Sigmoid colon (tissue), 7 donors: ENCODE measurements at regions of chr19 and their contacts with region 1.

Region 1: DNA sequence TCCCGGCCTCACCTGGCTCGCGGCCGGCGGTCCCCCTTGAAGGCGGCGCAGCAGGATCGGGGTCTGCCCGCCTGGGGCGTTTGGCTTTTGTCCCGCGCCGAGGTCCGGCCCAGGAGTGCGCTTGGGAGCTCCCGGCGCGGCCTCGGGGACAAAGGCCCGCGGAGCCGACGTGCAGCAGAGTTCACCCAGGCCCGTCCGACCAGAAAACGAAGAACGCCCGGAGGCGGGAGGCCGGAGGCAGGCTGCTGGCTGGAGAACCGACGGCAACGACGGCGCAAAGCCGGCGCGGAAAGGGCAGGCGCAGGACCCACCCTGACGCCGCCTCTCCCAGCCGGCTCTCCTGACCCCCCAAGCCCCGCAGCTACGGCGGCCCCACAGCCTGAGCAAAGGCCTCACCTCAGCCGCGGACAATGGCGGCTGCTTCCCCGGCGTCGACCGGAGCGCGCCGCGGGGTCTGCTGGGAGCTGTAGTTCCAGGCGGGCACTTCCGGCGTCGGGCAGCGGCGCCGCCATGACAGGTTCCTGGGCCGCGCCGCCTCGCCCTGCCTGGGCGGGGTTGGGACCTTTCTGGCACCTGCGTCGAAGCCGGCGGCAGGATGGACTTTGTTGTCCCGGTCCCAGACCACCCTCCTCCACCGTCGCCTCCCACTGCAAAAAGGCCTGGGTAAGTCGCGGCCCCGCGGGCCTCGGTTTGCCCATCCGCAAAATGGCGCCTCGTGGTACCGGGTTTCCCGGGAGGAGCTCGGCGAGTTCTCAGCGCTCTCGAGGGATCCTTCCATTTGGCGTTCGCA is at the start of gene ZNF606:
- DNase-seq: peak; percentile 91
- H3K4me3 ChIP-seq: peak within 1 kb of the TSS; percentile 63 to 99 (median 72)
- H3K27ac ChIP-seq: peak within 1 kb of the TSS; percentile 83 to 96 (median 90)
- H3K4me1 ChIP-seq: peaks cover 0 to 27% (median 21%) of the 10 kb centered on the region in 4 donors
- H3K27me3 ChIP-seq: no peaks in the 10 kb centered on the region
- CTCF ChIP-seq: no peak
- EP300 ChIP-seq: no peak
- POLR2A ChIP-seq: peak; percentile 64 to 70
- total RNA-seq, gene ZNF606: 9.8 to 32.1 (median 19.0) TPM

Region 2: GRCh38 chr19:57947208-57948134 is 55.1 kb before region 1 on chr19 and contains the start of gene ZNF256:
- intact Hi-C with region 1: loop called (anchors 5 kb)
- DNase-seq: peak; percentile 97
- H3K4me3 ChIP-seq: peak within 1 kb of the TSS; percentile 80 to 96 (median 92)
- H3K27ac ChIP-seq: peak within 1 kb of the TSS; percentile 83 to 88 (median 86)
- H3K4me1 ChIP-seq: peaks cover 0 to 16% (median 12%) of the 10 kb centered on the region in 4 donors
- H3K27me3 ChIP-seq: no peaks in the 10 kb centered on the region
- CTCF ChIP-seq: peak; percentile 51 to 67 (median 60)
- EP300 ChIP-seq: no peak
- POLR2A ChIP-seq: peak; percentile 19 to 27
- total RNA-seq, gene ZNF256: 2.8 to 4.8 (median 3.8) TPM

Region 3: GRCh38 chr19:58059003-58059670 is 56.6 kb after region 1 on chr19 and contains the start of gene ZNF135:
- intact Hi-C with region 1: loop called (anchors 5 kb)
- DNase-seq: peak; percentile 95
- H3K4me3 ChIP-seq: peak within 1 kb of the TSS; percentile 57 to 78 (median 62)
- H3K27ac ChIP-seq: peak within 1 kb of the TSS; percentile 89 to 94 (median 92)
- H3K4me1 ChIP-seq: peaks cover 0 to 12% (median 4%) of the 10 kb centered on the region in 4 donors
- H3K27me3 ChIP-seq: peaks cover 0 to 3% (median 0%) of the 10 kb centered on the region in 3 donors
- CTCF ChIP-seq: no peak
- EP300 ChIP-seq: no peak
- POLR2A ChIP-seq: peak in 1 of 2 donors; percentile 28
- total RNA-seq, gene ZNF135: 6.1 to 10.0 (median 7.4) TPM

Region 4: GRCh38 chr19:58097781-58098681 is 95.5 kb after region 1 on chr19 and contains the start of gene ZSCAN18:
- intact Hi-C with region 1: loop called (anchors 2 kb)
- DNase-seq: peak; percentile 99
- H3K4me3 ChIP-seq: peak within 1 kb of the TSS; percentile 87 to 99 (median 92)
- H3K27ac ChIP-seq: peak within 1 kb of the TSS; percentile 87 to 94 (median 92)
- H3K4me1 ChIP-seq: peaks cover 0 to 17% (median 15%) of the 10 kb centered on the region in 4 donors
- H3K27me3 ChIP-seq: no peaks in the 10 kb centered on the region
- CTCF ChIP-seq: no peak
- EP300 ChIP-seq: peak; percentile 32 to 88 (median 57)
- POLR2A ChIP-seq: peak; percentile 64 to 69
- total RNA-seq, gene ZSCAN18: 64.7 to 85.3 (median 73.8) TPM

Region 5: DNA sequence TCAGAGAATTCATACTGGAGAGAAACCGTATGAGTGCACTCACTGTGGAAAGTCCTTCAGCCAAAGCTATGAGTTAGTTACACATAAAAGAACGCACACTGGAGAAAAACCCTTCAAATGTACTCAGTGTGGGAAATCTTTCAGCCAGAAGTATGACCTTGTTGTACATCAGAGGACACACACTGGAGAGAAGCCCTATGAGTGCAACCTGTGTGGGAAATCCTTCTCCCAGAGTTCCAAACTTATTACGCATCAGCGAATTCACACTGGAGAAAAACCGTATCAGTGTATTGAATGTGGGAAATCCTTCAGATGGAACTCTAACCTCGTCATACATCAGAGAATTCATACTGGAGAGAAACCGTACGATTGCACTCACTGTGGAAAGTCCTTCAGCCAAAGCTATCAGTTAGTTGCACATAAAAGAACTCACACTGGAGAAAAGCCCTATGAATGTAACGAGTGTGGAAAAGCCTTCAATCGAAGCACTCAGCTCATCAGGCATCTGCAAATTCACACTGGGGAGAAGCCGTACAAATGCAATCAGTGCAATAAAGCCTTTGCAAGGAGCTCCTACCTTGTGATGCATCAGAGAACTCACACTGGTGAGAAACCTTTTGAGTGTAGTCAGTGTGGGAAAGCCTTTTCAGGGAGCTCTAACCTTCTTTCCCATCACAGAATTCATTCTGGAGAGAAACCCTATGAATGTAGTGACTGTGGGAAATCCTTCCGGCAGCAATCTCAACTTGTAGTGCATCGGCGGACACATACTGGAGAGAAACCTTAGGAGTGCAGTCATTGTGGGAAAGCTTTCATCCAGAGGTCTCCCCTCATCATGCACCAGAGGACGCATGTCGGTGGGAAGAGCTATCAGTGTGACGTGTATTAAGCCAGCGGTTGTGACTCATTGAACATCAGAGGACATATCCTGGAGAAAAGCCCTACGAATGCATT is 259.7 kb after region 1 on chr19:
- intact Hi-C with region 1: no loop called
- DNase-seq: no peak
- H3K4me3 ChIP-seq: no peak overlapping the region
- H3K27ac ChIP-seq: no peak overlapping the region
- H3K4me1 ChIP-seq: no peaks in the 10 kb centered on the region
- H3K27me3 ChIP-seq: no peaks in the 10 kb centered on the region
- CTCF ChIP-seq: no peak
- EP300 ChIP-seq: no peak
- POLR2A ChIP-seq: no peak